Activated naive CD4-positive, alpha-beta T cell treated with anti-CD3 and anti-CD28 coated beads for 36 hours (primary cell): ENCODE measurements at regions of chr5 and their contacts with region 1.

Region 1: DNA sequence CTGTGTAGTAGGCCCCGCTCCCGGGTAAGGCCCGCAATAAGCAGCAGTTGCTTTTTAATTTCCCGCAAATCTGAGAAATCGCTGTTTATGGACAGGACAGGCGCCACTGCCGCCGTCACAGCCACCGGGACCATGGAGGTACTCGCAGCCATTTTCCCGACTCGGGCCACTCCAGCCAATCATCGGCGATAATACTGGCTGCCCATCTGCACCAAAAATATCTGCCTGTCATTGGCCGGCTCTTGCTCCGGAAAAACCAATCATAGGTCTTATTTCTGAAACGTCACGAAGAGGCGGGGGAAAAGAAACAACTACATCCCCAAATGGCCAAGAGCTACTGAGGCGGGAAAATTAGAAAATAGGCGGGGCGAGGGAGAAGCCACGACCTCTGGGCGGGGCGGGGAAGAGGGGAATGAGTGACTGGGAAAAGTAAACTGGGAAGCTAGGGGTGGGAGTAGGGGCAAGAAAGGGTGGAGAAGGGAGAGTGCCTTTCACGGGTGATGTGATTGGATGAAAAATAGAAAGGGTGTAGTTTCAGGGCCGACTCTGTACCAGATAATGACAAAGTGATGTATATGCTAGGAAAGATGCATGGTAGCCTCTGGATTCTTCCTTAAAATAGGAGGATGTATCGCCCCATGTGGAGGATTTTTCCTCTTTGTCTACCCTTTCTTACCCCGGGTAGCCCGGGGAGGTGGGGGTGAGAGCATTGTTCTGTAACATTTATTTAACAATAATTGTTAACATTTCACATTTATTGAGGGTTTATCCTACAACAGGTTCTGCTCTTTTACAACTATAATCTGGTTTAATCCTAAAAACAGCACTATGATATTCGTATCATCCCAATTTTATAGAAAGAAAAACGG is at the start of gene CDC23:
- DNase-seq: peak; percentile 96
- H3K4me3 Mint-ChIP-seq: peak within 1 kb of the TSS; percentile 98
- H3K27ac Mint-ChIP-seq: peak within 1 kb of the TSS; percentile 89
- H3K4me1 Mint-ChIP-seq: peaks cover 18% of the 10 kb centered on the region
- H3K27me3 Mint-ChIP-seq: no peaks in the 10 kb centered on the region
- total RNA-seq, gene CDC23: 44.3 to 47.2 TPM

Region 2: GRCh38 chr5:137649228-137649935 is 564.0 kb before region 1 on chr5:
- CTCF ChIA-PET with region 1: no interaction called
- intact Hi-C with region 1: no loop called
- DNase-seq: no peak
- H3K4me3 Mint-ChIP-seq: no peak overlapping the region
- H3K27ac Mint-ChIP-seq: no peak overlapping the region
- H3K4me1 Mint-ChIP-seq: no peaks in the 10 kb centered on the region
- H3K27me3 Mint-ChIP-seq: no peaks in the 10 kb centered on the region

Region 3: GRCh38 chr5:138282920-138283742 is 69.7 kb after region 1 on chr5:
- CTCF ChIA-PET with region 1: no interaction called
- intact Hi-C with region 1: loop called (anchors 5 kb)
- DNase-seq: peak; percentile 15
- H3K4me3 Mint-ChIP-seq: no peak overlapping the region
- H3K27ac Mint-ChIP-seq: no peak overlapping the region
- H3K4me1 Mint-ChIP-seq: no peaks in the 10 kb centered on the region
- H3K27me3 Mint-ChIP-seq: no peaks in the 10 kb centered on the region

Region 4: GRCh38 chr5:138337685-138338410 is 124.5 kb after region 1 on chr5 and contains the start of gene FAM53C:
- CTCF ChIA-PET with region 1: no interaction called
- intact Hi-C with region 1: loop called (anchors 1 kb)
- DNase-seq: peak; percentile 91
- H3K4me3 Mint-ChIP-seq: peak within 1 kb of the TSS; percentile 87
- H3K27ac Mint-ChIP-seq: peak within 1 kb of the TSS; percentile 98
- H3K4me1 Mint-ChIP-seq: peaks cover 27% of the 10 kb centered on the region
- H3K27me3 Mint-ChIP-seq: no peaks in the 10 kb centered on the region
- total RNA-seq, gene FAM53C: 20.7 to 21.8 TPM

Region 5: DNA sequence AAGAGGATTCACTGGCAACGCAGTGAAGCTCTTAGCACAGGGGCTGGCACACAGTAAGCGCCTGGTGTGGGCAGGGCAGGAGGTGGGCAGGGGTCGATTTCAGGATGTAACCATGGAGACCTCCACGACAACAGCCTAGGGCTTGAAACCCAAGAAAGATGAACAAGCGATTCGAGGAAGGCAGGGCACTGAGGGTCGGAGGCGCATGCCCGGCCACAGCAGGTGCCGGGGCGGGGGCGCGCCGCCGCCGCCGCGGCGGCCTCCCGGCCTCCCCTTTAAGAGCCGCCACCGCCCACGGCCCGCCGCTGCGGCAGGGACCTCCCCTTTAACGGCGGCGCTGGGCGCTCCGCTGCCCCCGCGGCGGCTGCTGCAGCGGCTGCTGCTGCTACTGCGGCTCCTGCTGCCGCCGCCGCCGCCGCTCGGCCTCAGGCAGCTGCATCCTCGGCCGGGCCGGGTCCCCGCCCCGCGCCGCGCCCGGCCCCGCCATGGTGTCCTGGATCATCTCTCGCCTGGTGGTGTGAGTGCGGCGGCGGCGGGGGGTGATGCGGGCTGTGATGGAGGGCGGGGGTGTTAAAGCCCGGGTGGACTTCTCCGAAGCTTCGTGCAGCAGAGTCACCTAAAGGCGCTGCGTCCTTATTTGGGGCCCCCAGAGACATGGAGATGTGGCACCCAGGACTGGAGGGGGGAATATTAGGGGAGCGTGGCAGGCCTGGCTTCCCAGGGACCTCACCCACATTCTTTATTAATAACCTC is 225.5 kb after region 1 on chr5 and contains the start of gene REEP2:
- CTCF ChIA-PET with region 1: no interaction called
- intact Hi-C with region 1: loop called (anchors 10 kb)
- DNase-seq: peak; percentile 62
- H3K4me3 Mint-ChIP-seq: peak within 1 kb of the TSS; percentile 72
- H3K27ac Mint-ChIP-seq: no peak within 1 kb of the TSS
- H3K4me1 Mint-ChIP-seq: peaks cover 5% of the 10 kb centered on the region
- H3K27me3 Mint-ChIP-seq: peaks cover 3% of the 10 kb centered on the region
- total RNA-seq, gene REEP2: 1.8 to 2.2 TPM

Region 6: DNA sequence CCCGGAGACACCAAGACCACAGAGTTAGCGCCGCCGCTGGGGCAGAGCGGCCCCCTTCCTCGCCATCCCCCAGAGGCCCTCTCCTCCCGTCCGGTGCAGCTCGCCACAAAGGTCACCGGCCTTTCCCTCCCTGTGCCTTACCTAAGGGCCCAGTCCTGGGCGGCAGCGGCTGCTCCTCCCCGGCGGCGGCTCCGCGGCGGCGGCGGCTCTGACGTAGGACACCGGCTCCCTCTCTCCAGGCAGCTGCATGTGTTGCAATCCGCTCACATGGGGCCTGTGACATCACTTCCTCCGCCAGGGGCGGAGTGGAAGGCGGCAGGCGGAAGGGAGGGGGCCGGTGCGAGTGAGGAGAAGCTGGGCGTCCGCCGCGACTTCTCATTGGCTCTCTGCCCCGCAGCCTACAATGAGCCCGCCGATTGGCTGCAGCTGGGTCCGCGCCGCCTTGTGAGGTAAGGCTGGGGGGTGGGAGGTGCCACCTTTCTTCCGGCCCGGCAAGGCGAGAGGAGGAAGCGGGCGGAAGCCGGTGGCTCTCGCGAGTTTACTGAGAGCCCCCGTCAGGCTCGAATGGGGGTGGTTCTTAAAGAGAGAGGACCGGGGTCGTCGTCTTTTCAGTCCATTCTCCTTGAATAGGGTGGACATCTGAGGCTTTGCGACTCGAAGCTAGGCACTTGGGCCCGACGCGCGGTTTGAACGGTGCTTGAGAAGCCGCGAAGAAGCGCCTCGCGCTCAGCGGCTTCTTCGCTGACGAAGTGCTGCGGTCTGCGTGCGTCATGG is 329.7 kb after region 1 on chr5 and contains the start of gene ETF1:
- CTCF ChIA-PET with region 1: no interaction called
- intact Hi-C with region 1: loop called (anchors 1 kb)
- DNase-seq: peak; percentile 100
- H3K4me3 Mint-ChIP-seq: peak within 1 kb of the TSS; percentile 100
- H3K27ac Mint-ChIP-seq: peak within 1 kb of the TSS; percentile 100
- H3K4me1 Mint-ChIP-seq: peaks cover 71% of the 10 kb centered on the region
- H3K27me3 Mint-ChIP-seq: no peaks in the 10 kb centered on the region
- total RNA-seq, gene ETF1: 99.8 to 107 TPM